ENCODE measurements at regions of chr19 and their contacts with region 1.

Region 1: DNA sequence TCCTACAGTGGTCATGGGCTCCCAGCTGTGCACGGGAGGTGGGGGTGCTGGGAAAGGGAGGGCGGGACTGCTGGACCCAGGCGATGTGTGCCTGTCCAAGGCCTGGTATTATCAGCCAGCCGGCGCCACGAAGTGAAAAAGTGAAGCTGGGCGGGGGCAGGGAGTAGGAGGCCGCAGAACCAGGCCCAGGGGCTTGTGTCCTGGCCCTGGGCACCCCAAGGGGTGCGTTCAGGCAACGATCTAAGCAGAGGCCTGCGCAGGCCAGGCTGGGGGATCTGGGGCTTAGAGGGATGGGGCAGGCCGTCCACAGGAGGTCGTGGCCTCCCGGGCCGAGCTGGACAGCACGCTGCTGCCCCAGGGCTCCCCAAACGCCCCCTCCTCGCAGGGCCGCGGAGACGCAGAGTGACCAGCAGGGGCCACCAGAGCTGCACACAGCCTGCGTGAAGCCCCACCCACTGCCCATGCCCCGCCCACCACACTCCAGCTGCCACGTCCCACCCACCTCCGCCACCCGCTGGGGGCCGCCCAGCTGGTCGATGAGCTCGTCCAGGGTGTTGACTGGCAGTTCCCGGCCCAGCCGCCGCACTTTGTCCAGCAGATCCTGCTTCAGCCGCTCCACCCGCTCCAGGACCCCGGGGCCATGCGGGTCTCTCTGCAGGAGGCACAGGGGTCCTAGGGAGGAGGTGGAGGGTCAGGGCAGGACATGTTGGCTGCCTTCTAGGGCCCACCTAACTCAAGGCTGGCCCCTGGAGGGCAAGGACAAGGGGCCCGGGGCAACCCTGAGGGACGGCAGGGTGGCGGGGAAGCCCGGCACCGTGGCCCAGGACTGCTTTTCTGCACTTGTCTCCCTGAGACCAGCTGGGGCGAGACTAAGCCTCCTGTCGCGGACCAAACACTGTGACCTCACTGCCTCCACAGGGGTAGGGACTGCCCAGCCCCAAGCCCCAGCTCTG is 9.5 kb downstream of the GPX4 start:
- DNase-seq: peak; percentile 62 to 98 (median 96)
- H3K4me3 ChIP-seq: peak overlapping the region in 36 of 59 donors; percentile 0 to 54 (median 24)
- H3K27ac ChIP-seq: peak overlapping the region; percentile 37 to 95 (median 89)
- H3K27me3 ChIP-seq: no peaks in the 10 kb centered on the region
- CTCF ChIP-seq: peak; percentile 70 to 99 (median 96)

Region 2: GRCh38 chr19:1173845-1174809 is 60.8 kb after region 1 on chr19 and contains the start of gene SBNO2:
- intact Hi-C with region 1: loop called in 1 of 2 experiments (anchors 5 kb)
- DNase-seq: peak; percentile 66 to 90 (median 76)
- H3K4me3 ChIP-seq: peak within 1 kb of the TSS; percentile 58 to 97 (median 80)
- H3K27ac ChIP-seq: peak within 1 kb of the TSS in 56 of 59 donors; percentile 25 to 92 (median 84)
- H3K27me3 ChIP-seq: no peaks in the 10 kb centered on the region
- CTCF ChIP-seq: peak in 19 of 56 donors; percentile 7 to 38 (median 17)
- total RNA-seq, gene SBNO2: 10.1 to 52.7 (median 22.7) TPM

Region 3: GRCh38 chr19:1189419-1189818 is 76.1 kb after region 1 on chr19:
- intact Hi-C with region 1: loop called (anchors 5 kb)
- DNase-seq: no peak
- H3K4me3 ChIP-seq: no peak overlapping the region
- H3K27ac ChIP-seq: no peak overlapping the region
- H3K27me3 ChIP-seq: no peaks in the 10 kb centered on the region
- CTCF ChIP-seq: no peak

Measured in dorsolateral prefrontal cortex (tissue), 120 donors.